Left lung (tissue), 14 donors: ENCODE measurements at regions of chr10 and their contacts with region 1.

Region 1: GRCh38 chr10:101214446-101215396 is 14.5 kb downstream of the LBX1 start:
- DNase-seq: peak; percentile 53 to 86 (median 66)
- ATAC-seq: peak; percentile 78
- H3K4me3 ChIP-seq: no peak overlapping the region
- H3K27ac ChIP-seq: no peak overlapping the region
- H3K4me1 ChIP-seq: peaks cover 12 to 44% of the 10 kb centered on the region in 2 donors
- H3K27me3 ChIP-seq: peaks cover 78 to 100% of the 10 kb centered on the region in 2 donors
- CTCF ChIP-seq: peak; percentile 85 to 86

Region 2: DNA sequence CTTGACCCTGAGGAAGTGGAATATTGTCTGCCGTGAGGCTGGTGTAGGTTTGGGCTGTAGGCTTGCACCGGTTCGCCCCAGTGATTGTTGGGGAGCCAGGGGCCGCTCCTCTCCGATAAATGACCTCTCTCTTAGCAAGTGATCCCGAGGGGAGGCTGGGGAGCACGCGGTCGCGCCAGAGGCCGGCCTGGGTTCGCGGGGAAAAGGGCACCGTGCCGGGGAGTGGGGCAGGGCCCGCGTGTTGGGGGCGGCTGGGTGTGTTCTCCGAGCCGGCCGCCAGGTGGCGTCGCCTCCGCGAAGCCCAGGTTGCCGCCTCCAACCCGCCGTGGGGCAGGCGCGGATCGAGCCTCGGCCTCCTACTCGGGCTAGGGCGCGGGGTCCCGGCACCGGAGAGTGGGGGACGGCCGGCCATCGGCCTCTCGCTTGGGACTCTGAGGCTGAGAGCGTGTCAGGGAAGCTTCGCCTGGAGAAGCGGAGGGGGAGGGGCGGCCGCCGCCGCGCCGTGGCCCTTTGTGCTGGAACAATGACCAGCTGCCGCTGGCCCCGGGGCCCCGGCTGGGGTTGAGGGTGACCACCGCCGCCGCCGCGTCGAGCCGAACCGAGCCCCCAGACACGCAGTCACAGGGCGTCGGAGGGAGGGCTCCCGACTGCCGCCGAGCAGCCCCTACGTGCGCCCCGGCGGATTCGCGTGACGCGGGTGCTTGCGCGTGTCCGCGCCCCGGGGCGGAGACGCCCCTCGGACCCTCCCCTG is 215.6 kb before region 1 on chr10:
- intact Hi-C with region 1: no loop called
- DNase-seq: peak; percentile 85 to 97 (median 90)
- ATAC-seq: peak; percentile 75
- H3K4me3 ChIP-seq: peak overlapping the region; percentile 60 to 90
- H3K27ac ChIP-seq: peak overlapping the region; percentile 94 to 100
- H3K4me1 ChIP-seq: peaks cover 28 to 52% of the 10 kb centered on the region in 2 donors
- H3K27me3 ChIP-seq: no peaks in the 10 kb centered on the region
- CTCF ChIP-seq: peak; percentile 96 to 99

Region 3: GRCh38 chr10:101272229-101272868 is 57.6 kb after region 1 on chr10:
- intact Hi-C with region 1: no loop called
- DNase-seq: peak in 1 of 4 donors; percentile 51
- ATAC-seq: peak; percentile 97
- H3K4me3 ChIP-seq: no peak overlapping the region
- H3K27ac ChIP-seq: no peak overlapping the region
- H3K4me1 ChIP-seq: no peaks in the 10 kb centered on the region
- H3K27me3 ChIP-seq: peaks cover 0 to 59% of the 10 kb centered on the region in 2 donors
- CTCF ChIP-seq: peak; percentile 61 to 68

Region 4: DNA sequence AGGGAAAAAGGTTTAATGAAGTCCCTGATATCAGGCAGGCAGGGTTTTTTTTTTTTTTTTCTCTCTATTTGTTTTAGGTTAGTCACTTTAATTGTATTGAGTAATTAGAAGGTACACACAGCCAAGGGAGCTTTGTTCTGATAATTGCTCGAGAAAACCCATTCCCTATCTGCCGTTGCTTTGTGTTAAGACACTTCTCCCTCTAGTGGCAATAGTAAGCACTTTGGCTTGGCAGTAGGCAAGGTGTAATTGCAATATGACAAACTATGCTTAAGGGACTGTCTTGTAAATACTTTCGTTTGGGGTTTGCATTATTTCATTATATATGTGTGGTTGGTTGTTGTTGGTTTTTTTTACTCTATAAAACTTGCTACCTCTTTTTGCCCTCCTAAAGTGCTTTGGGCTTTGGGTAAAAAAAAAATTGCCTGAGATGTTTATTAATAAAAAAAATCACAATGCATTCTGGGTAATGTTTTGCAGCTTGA is 252.6 kb after region 1 on chr10:
- intact Hi-C with region 1: loop called in 1 of 2 experiments (anchors 10 kb)
- DNase-seq: peak in 2 of 4 donors; percentile 39 to 63
- ATAC-seq: peak; percentile 97
- H3K4me3 ChIP-seq: no peak overlapping the region
- H3K27ac ChIP-seq: no peak overlapping the region
- H3K4me1 ChIP-seq: peaks cover 0 to 4% of the 10 kb centered on the region in 2 donors
- H3K27me3 ChIP-seq: no peaks in the 10 kb centered on the region
- CTCF ChIP-seq: peak; percentile 64 to 70

Region 5: GRCh38 chr10:101569838-101570766 is 355.4 kb after region 1 on chr10:
- intact Hi-C with region 1: loop called in 1 of 2 experiments (anchors 5 kb)
- DNase-seq: peak; percentile 79 to 98 (median 85)
- ATAC-seq: peak; percentile 98
- H3K4me3 ChIP-seq: peak overlapping the region; percentile 25 to 54
- H3K27ac ChIP-seq: no peak overlapping the region
- H3K4me1 ChIP-seq: peaks cover 13 to 25% of the 10 kb centered on the region in 2 donors
- H3K27me3 ChIP-seq: peaks cover 31 to 59% of the 10 kb centered on the region in 2 donors
- CTCF ChIP-seq: peak; percentile 94 to 96

Region 6: GRCh38 chr10:102713814-102714620 is 1499.3 kb after region 1 on chr10 and contains the start of gene ARL3:
- intact Hi-C with region 1: no loop called
- DNase-seq: peak; percentile 97 to 100 (median 99)
- ATAC-seq: peak; percentile 96
- H3K4me3 ChIP-seq: peak within 1 kb of the TSS; percentile 97
- H3K27ac ChIP-seq: peak within 1 kb of the TSS; percentile 88 to 94
- H3K4me1 ChIP-seq: peaks cover 0 to 34% of the 10 kb centered on the region in 2 donors
- H3K27me3 ChIP-seq: no peaks in the 10 kb centered on the region
- CTCF ChIP-seq: peak in 1 of 2 donors; percentile 56
- polyA plus RNA-seq, gene ARL3: 21.2 to 23.2 (median 22.4) TPM